ENCODE measurements at regions of chr18 and their contacts with region 1.

Region 1: DNA sequence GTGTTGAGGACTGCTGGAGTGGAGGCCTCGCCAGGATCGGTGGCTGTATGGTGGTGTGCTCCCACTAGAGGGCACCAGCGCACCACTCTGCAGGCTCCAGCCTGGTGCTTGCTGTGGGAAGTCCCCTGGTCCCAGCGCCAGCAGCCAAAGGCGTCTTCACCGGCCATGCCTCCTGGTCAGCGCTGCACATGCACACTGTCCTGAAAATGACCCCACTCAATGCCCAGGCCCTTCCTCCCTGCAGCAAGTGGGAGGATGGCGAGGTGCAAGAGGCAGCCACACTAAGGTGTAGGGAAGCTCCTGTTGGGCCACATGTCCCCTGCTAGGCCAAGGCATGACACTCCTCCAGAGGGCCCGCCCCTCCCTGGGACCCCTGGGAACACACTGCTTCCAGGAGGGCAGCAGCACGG is 136.5 kb downstream of the CTIF start:
- DNase-seq: peak; percentile 92
- H3K4me3 Mint-ChIP-seq: no peak overlapping the region
- H3K27ac Mint-ChIP-seq: no peak overlapping the region
- H3K4me1 Mint-ChIP-seq: no peaks in the 10 kb centered on the region
- H3K27me3 Mint-ChIP-seq: no peaks in the 10 kb centered on the region
- CTCF ChIP-seq: peak; percentile 94

Region 2: DNA sequence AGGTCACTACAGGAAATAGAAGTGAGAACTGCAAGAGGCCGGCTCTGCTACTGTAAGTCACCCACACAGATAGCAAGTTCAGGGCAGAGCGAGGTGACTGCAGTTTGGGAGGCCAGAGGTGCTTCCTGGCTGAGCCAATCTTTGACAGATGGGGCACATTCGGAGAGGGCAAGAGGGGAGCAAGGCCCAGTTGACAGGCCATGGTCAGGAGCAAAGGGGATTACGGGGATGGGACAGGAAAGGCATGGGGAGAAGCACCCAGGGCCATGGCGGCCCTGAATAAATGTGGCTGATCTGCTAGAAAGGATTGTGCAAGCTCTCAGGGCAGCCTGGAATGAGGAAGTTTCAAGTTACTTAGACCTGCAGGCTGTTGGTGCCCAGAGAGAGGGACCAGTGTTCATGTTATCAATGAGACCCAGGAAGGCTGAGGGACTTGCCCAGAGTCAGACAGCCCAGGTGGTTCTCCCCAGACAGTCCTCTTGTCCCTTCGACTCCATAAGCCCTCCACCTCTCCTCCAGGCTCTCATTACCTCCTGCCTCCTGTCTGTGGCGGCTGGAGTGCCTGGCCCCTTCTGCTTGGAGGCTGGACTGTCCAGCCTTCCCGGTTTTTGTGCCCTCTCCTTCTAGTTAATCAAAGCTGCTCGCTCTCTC is 13.2 kb before region 1 on chr18:
- CTCF ChIA-PET with region 1: no interaction called
- intact Hi-C with region 1: no loop called
- DNase-seq: peak; percentile 52
- H3K4me3 Mint-ChIP-seq: peak overlapping the region; percentile 35
- H3K27ac Mint-ChIP-seq: peak overlapping the region; percentile 66
- H3K4me1 Mint-ChIP-seq: peaks cover 39% of the 10 kb centered on the region
- H3K27me3 Mint-ChIP-seq: no peaks in the 10 kb centered on the region
- CTCF ChIP-seq: no peak

Region 3: GRCh38 chr18:48951448-48952286 is 276.3 kb after region 1 on chr18:
- CTCF ChIA-PET with region 1: no interaction called
- intact Hi-C with region 1: loop called (anchors 10 kb)
- DNase-seq: peak; percentile 82
- H3K4me3 Mint-ChIP-seq: peak overlapping the region; percentile 77
- H3K27ac Mint-ChIP-seq: peak overlapping the region; percentile 75
- H3K4me1 Mint-ChIP-seq: peaks cover 52% of the 10 kb centered on the region
- H3K27me3 Mint-ChIP-seq: no peaks in the 10 kb centered on the region
- CTCF ChIP-seq: peak; percentile 26

Region 4: DNA sequence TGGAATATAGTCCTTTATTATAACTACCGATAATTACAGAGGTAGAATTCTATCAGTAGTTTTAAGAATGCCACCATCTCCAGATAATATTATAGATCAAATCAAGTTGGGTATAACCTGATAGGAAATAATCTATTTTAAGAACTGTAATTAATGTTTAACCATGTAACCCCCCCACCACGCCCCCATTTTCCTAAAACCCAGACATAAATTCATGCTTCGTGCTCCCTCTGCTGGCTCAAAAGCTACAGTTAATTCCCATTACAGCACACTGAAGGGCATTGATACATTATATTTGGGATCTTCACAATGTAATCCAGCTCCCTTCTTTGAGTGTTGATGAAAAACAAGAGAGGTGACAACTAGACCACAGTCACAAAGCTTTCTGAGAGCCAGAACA is 503.4 kb after region 1 on chr18:
- CTCF ChIA-PET with region 1: no interaction called
- intact Hi-C with region 1: loop called (anchors 1 kb)
- DNase-seq: peak; percentile 42
- H3K4me3 Mint-ChIP-seq: no peak overlapping the region
- H3K27ac Mint-ChIP-seq: no peak overlapping the region
- H3K4me1 Mint-ChIP-seq: peaks cover 12% of the 10 kb centered on the region
- H3K27me3 Mint-ChIP-seq: no peaks in the 10 kb centered on the region
- CTCF ChIP-seq: peak; percentile 70

Region 5: GRCh38 chr18:49335677-49336076 is 660.3 kb after region 1 on chr18:
- CTCF ChIA-PET with region 1: interaction called, 3 read pairs
- intact Hi-C with region 1: loop called (anchors 5 kb)
- DNase-seq: peak; percentile 50
- H3K4me3 Mint-ChIP-seq: no peak overlapping the region
- H3K27ac Mint-ChIP-seq: no peak overlapping the region
- H3K4me1 Mint-ChIP-seq: peaks cover 14% of the 10 kb centered on the region
- H3K27me3 Mint-ChIP-seq: no peaks in the 10 kb centered on the region
- CTCF ChIP-seq: peak; percentile 37

Region 6: DNA sequence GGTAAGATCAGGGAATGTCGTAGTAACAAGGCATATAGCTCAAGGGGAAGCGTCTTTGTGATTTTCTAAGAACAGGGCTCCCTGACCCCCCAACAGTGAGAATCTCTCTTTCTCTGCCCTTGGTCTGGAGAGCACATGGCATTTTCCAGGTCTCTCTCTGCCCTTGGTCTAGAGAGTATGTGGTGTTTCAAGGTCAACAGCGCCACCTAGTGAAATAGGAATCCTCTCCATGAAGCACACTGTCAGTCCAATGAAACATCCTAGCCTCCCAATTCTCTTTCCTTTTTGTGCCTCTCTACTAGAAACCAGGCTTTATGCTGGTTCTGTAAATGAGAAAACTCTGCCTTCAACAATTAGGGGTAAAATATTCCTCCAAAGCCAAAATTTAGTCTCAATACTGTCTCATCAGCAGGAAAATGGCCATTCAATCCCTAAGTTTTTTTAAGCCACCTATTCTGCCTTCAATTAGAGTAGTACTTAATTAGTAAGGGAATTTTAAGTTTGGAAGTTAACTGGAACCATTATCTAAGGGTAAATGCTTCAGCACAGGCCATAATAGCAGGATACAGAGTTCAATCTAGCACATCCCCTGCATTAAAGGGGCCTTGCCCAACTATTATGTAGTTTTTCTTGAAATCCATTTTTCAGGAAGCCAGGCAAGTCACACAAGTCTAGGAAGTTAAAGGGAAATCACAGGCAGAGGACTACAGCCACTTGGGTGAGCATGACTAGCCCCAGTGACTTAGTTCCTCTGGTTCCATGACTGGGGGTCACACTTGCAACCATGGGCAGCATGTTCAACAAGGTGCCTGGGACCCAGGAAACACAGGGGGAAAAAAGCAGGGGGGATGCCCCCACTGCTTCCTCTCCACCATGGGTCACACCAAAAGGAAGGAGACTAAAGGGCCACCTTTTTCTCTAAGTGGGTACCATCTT is 772.7 kb after region 1 on chr18:
- CTCF ChIA-PET with region 1: no interaction called
- intact Hi-C with region 1: loop called (anchors 10 kb)
- DNase-seq: peak; percentile 59
- H3K4me3 Mint-ChIP-seq: no peak overlapping the region
- H3K27ac Mint-ChIP-seq: no peak overlapping the region
- H3K4me1 Mint-ChIP-seq: no peaks in the 10 kb centered on the region
- H3K27me3 Mint-ChIP-seq: no peaks in the 10 kb centered on the region
- CTCF ChIP-seq: peak; percentile 72

Measured in Calu3 (cell line).